HCT116 (cell line): ENCODE measurements at regions of chr9 and their contacts with region 1.

Region 1: GRCh38 chr9:87812375-87813118 is 70.1 kb upstream of the SPATA31E1 start:
- DNase-seq: no peak
- ATAC-seq: peak; percentile 90
- H3K4me3 ChIP-seq: no peak overlapping the region
- H3K27ac ChIP-seq: no peak overlapping the region
- H3K4me1 ChIP-seq: peaks cover 0 to 4% of the 10 kb centered on the region in 2 experiments; a peak in 1 of 4 replicates
- H3K27me3 ChIP-seq: no peaks in the 10 kb centered on the region
- CTCF ChIP-seq: peak; percentile 93 to 99 (median 98)
- POLR2A ChIP-seq: no peak
- RAD21 ChIP-seq: peak; percentile 97

Region 2: GRCh38 chr9:87336914-87337333 is 475.6 kb before region 1 on chr9:
- CTCF ChIA-PET with region 1: no interaction called
- POLR2A ChIA-PET with region 1: no interaction called
- RAD21 ChIA-PET with region 1: no interaction called
- intact Hi-C with region 1: loop called (anchors 5 kb)
- DNase-seq: peak; percentile 54
- ATAC-seq: peak; percentile 81
- H3K4me3 ChIP-seq: no peak overlapping the region
- H3K27ac ChIP-seq: no peak overlapping the region
- H3K4me1 ChIP-seq: no peaks in the 10 kb centered on the region
- H3K27me3 ChIP-seq: peaks cover 26% of the 10 kb centered on the region
- CTCF ChIP-seq: peak; percentile 40 to 73 (median 65); a peak in 5 of 6 replicates
- POLR2A ChIP-seq: no peak
- RAD21 ChIP-seq: peak; percentile 84

Region 3: DNA sequence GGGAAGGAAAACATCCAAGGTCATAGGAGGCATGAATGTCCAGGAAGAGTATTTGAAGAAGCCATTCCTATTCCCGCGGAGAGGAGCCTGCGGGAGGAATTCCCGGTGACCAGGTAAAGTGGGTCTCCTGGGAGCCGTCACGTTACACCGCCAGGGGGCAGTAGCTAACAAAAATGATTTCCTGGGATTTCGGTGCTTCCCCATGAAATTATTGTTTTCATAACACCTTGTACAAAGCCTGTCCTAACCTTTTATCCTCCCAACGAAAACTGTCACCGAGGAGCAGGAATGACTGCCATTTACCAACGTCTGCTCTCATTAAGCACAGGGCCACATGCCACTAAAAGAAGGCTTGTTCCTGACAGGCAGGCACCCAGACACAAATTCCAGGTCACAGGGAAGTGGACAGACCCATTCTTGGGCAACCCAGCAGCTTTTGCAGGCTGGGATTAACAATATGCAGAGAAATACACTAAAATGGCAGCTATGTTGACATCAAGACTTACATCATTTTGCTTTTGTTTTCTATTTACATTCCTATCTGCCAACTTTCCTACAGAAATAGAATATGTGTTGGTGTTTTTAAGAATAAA is 127.8 kb before region 1 on chr9:
- CTCF ChIA-PET with region 1: interaction called, 33 read pairs
- POLR2A ChIA-PET with region 1: no interaction called
- RAD21 ChIA-PET with region 1: no interaction called
- intact Hi-C with region 1: loop called (anchors 1 kb)
- DNase-seq: peak; percentile 15
- ATAC-seq: peak; percentile 90
- H3K4me3 ChIP-seq: no peak overlapping the region
- H3K27ac ChIP-seq: no peak overlapping the region
- H3K4me1 ChIP-seq: peaks cover 0 to 4% of the 10 kb centered on the region in 2 experiments; a peak in 1 of 4 replicates
- H3K27me3 ChIP-seq: no peaks in the 10 kb centered on the region
- CTCF ChIP-seq: peak; percentile 72 to 86 (median 75); a peak in 5 of 6 replicates
- POLR2A ChIP-seq: no peak
- RAD21 ChIP-seq: peak; percentile 88